ENCODE measurements at regions of chr16 and their contacts with region 1.

Region 1: GRCh38 chr16:23466066-23466885 is 13.3 kb upstream of the COG7 start:
- DNase-seq: no peak
- H3K4me3 ChIP-seq: no peak overlapping the region
- H3K27ac ChIP-seq: no peak overlapping the region
- H3K4me1 ChIP-seq: peaks cover 15% of the 10 kb centered on the region
- H3K27me3 ChIP-seq: no peaks in the 10 kb centered on the region
- CTCF ChIP-seq: no peak

Region 2: GRCh38 chr16:23494188-23494587 is 27.9 kb after region 1 on chr16:
- CTCF ChIA-PET with region 1: no interaction called
- POLR2A ChIA-PET with region 1: no interaction called
- intact Hi-C with region 1: no loop called
- DNase-seq: no peak
- H3K4me3 ChIP-seq: no peak overlapping the region
- H3K27ac ChIP-seq: no peak overlapping the region
- H3K4me1 ChIP-seq: no peaks in the 10 kb centered on the region
- H3K27me3 ChIP-seq: no peaks in the 10 kb centered on the region
- CTCF ChIP-seq: no peak

Region 3: GRCh38 chr16:23504451-23505179 is 38.3 kb after region 1 on chr16:
- CTCF ChIA-PET with region 1: interaction called, 15 read pairs
- POLR2A ChIA-PET with region 1: interaction called, 5 read pairs
- intact Hi-C with region 1: no loop called
- DNase-seq: peak; percentile 72 to 92
- H3K4me3 ChIP-seq: no peak overlapping the region
- H3K27ac ChIP-seq: no peak overlapping the region
- H3K4me1 ChIP-seq: peaks cover 31% of the 10 kb centered on the region
- H3K27me3 ChIP-seq: no peaks in the 10 kb centered on the region
- CTCF ChIP-seq: no peak